ENCODE measurements at regions of chr3 and their contacts with region 1.

Region 1: DNA sequence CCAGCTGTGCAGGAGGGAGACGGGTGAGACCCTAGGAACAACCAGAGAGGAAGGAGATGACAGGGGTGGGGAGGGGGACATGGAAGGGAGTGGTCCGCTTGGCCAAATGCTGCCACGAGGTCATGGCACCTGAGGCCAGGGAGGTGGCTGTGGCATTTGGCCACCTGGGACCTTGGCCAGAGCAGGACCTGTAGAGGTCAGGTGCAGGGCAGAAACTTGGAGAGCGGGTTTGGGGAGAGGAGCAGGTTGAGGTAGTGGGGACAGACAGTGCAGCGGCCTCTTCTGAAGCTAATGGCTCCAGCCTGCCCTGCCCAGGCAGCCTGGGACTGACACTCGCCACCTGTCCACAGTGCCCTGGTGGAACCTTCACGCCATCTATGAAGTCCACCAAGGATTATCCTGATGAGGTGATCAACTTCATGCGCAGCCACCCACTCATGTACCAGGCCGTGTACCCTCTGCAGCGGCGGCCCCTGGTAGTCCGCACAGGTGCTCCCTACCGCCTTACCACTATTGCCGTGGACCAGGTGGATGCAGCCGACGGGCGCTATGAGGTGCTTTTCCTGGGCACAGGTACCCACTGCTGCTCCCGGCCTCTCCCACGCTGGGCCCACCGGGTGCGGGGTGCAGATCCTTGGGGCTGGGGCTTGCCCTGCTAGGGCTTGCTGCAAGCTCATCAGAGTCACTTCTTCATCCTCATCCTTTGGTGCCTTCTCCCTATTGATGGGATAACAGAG is 7.0 kb upstream of the GNAT1 start:
- DNase-seq: no peak
- H3K4me3 ChIP-seq: no peak overlapping the region
- H3K4me3 Mint-ChIP-seq: no peak overlapping the region
- H3K27ac ChIP-seq: no peak overlapping the region
- H3K27ac Mint-ChIP-seq: no peak overlapping the region
- H3K4me1 ChIP-seq: no peaks in the 10 kb centered on the region
- H3K4me1 Mint-ChIP-seq: no peaks in the 10 kb centered on the region
- H3K27me3 ChIP-seq: no peaks in the 10 kb centered on the region
- H3K27me3 Mint-ChIP-seq: peaks cover 1 to 6% (median 5%) of the 10 kb centered on the region in 3 donors
- CTCF ChIP-seq: no peak

Region 2: DNA sequence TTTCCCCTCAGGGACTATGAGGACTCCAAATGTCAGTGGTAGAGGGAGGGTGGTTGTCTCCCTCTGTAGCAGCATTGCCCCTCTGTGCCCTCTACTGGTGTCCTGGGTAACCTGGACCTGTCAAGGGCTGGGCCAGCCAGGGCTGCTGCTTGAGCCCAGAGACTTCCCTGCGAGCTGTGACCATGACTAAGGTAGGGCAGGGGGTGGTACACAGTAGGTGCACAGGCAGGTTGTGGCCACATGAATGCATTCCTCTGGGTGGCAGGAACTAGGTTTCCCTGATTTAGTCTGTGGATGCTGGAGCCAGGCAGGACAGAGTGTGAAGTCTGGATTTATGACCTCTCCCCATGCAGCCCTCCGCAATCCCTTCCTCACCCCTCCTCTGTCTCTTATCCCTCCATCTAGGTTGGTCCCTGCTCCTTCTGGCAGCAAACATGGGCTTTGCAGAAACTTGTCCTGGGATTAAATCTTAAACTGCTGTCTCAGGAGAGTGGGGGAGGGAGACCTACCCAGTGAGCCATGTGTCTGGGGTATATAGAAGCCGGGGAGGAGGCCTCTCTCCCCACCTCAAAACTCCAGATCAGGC is 38.0 kb before region 1 on chr3:
- intact Hi-C with region 1: loop called in 1 of 2 experiments (anchors 5 kb)
- DNase-seq: no peak
- H3K4me3 ChIP-seq: no peak overlapping the region
- H3K4me3 Mint-ChIP-seq: no peak overlapping the region
- H3K27ac ChIP-seq: no peak overlapping the region
- H3K27ac Mint-ChIP-seq: no peak overlapping the region
- H3K4me1 ChIP-seq: peaks cover 5 to 10% of the 10 kb centered on the region in 2 donors
- H3K4me1 Mint-ChIP-seq: peaks cover 8% of the 10 kb centered on the region
- H3K27me3 ChIP-seq: no peaks in the 10 kb centered on the region
- H3K27me3 Mint-ChIP-seq: peaks cover 6 to 10% (median 9%) of the 10 kb centered on the region in 3 donors
- CTCF ChIP-seq: no peak

Region 3: DNA sequence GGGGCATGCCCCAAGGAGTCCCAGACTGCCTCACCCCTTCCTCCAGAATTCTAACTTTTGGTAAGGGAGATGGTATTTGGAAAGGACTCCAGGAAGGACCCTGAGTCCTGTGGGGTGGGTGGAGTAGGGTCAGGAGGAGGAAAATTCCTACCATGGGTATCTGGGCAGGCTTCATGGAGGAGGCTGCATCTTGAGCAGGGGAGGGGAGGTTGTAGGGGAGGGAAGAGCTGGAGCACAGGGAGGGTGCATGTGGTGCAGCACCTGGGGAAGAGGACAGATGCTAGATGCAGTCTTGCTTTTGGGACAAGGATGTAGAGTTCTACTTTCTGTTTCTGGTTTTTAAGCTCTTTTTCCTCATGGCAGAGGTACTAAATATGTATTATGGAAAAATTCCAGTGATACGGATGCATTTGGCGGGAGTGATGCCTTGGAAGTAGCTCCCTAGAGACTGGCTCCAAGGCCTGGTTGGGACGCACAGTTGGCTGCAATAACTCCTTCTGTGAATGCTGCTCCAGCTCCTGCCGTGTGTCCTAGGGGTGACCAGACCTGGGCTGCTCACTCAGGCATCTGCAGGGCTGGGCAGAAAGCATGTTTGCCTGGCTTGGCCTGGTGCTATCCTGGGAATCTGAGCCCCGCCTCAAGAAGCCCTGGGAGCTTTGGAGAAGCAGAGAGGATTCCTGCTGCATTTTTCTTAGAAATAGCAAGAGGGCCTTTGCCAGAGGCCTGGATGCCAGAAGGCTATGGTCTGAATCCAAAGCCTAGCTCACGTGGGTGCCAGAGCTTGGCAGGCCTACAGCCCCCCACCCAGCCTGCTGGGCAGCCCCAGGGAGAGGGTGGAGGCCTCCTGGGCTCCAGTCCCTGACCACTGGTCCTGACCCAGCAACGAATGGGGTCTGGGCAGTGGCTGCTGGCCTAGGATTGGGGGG is 19.2 kb before region 1 on chr3:
- intact Hi-C with region 1: no loop called
- DNase-seq: no peak
- H3K4me3 ChIP-seq: no peak overlapping the region
- H3K4me3 Mint-ChIP-seq: no peak overlapping the region
- H3K27ac ChIP-seq: no peak overlapping the region
- H3K27ac Mint-ChIP-seq: no peak overlapping the region
- H3K4me1 ChIP-seq: no peaks in the 10 kb centered on the region
- H3K4me1 Mint-ChIP-seq: peaks cover 5% of the 10 kb centered on the region
- H3K27me3 ChIP-seq: no peaks in the 10 kb centered on the region
- H3K27me3 Mint-ChIP-seq: peaks cover 4 to 7% (median 4%) of the 10 kb centered on the region in 3 donors
- CTCF ChIP-seq: no peak